ENCODE measurements at regions of chr18 and their contacts with region 1.

Region 1: DNA sequence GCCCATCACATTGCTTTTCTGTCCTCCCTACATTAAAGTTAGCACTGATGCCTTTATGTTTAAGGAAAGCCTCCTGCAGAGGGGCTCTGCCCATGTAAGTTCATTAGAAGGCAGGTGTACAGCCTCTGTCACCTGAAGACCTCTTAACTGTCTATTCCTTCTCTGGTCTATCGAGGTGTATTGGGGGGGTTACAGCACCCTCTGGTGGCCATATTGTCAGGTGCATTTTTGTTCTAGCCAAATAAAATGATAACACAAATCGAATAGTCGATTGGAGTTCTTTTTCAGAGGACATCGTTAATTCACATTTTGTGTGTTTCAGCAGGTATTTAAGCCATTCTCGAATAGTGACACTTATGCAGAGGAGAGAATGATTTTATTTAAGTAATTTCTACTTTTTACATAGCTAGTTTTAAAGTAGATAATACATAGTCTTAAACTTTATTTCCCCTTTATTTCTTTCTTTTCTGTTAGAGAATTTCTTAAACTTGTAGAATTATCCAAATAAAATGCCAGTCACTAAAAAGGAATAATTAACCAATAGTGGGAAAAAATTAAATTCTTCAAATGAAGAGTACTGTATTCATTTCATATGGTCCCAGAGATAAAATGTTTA is 136.8 kb downstream of the NEDD4L start:
- DNase-seq: peak; percentile 36 to 55 (median 46)
- H3K4me3 ChIP-seq: no peak overlapping the region
- H3K4me3 Mint-ChIP-seq: no peak overlapping the region
- H3K27ac ChIP-seq: no peak overlapping the region
- H3K27ac Mint-ChIP-seq: no peak overlapping the region
- H3K4me1 ChIP-seq: no peaks in the 10 kb centered on the region
- H3K4me1 Mint-ChIP-seq: peaks cover 0 to 4% (median 2%) of the 10 kb centered on the region in 4 donors
- H3K27me3 ChIP-seq: no peaks in the 10 kb centered on the region
- H3K27me3 Mint-ChIP-seq: peaks cover 3 to 5% of the 10 kb centered on the region in 2 donors

Region 2: DNA sequence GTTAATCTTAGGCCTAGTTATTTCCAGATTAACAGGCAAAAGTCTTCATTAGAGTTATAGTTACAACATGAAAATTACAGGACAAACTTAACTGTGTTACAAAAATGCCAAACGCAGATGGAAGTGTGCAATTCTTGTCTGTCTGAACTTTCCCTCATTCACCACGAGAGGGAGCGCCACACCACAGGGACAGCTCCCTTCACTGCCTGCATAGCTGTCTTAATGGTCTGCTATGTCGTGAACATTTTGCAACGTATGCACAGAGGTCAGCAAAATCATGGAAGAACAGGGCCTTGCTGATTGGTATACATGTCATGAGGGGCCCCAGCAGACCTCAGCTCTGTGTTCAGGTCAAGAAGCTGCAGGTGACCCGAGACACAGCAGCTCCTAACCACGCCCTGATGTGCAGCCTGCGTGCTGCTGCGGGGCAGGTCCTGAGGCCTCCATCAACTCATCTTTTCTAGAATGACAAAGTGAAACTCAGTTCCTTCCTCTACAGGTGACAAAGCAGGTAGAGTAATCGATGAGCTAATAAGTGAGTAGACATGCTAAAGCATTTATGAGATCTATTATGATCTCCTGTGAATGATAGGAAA is 298.9 kb before region 1 on chr18:
- CTCF ChIA-PET with region 1: interaction called, 4 read pairs
- POLR2A ChIA-PET with region 1: no interaction called
- intact Hi-C with region 1: loop called (anchors 2 kb)
- DNase-seq: peak in 4 of 5 donors; percentile 19 to 38 (median 30)
- H3K4me3 ChIP-seq: no peak overlapping the region
- H3K4me3 Mint-ChIP-seq: no peak overlapping the region
- H3K27ac ChIP-seq: no peak overlapping the region
- H3K27ac Mint-ChIP-seq: no peak overlapping the region
- H3K4me1 ChIP-seq: no peaks in the 10 kb centered on the region
- H3K4me1 Mint-ChIP-seq: peaks cover 0 to 3% (median 0%) of the 10 kb centered on the region in 4 donors
- H3K27me3 ChIP-seq: no peaks in the 10 kb centered on the region
- H3K27me3 Mint-ChIP-seq: peaks cover 2 to 11% of the 10 kb centered on the region in 2 donors

Region 3: GRCh38 chr18:58195278-58195765 is 14.5 kb after region 1 on chr18:
- CTCF ChIA-PET with region 1: interaction called, 17 read pairs
- POLR2A ChIA-PET with region 1: no interaction called
- intact Hi-C with region 1: no loop called
- DNase-seq: peak; percentile 11 to 37 (median 22)
- H3K4me3 ChIP-seq: peak overlapping the region in 1 of 2 donors; percentile 37
- H3K4me3 Mint-ChIP-seq: peak overlapping the region; percentile 76 to 91 (median 84)
- H3K27ac ChIP-seq: no peak overlapping the region
- H3K27ac Mint-ChIP-seq: peak overlapping the region in 3 of 7 donors; percentile 76 to 85 (median 77)
- H3K4me1 ChIP-seq: no peaks in the 10 kb centered on the region
- H3K4me1 Mint-ChIP-seq: peaks cover 6 to 27% (median 14%) of the 10 kb centered on the region in 4 donors
- H3K27me3 ChIP-seq: no peaks in the 10 kb centered on the region
- H3K27me3 Mint-ChIP-seq: peaks cover 3 to 7% of the 10 kb centered on the region in 2 donors

Region 4: DNA sequence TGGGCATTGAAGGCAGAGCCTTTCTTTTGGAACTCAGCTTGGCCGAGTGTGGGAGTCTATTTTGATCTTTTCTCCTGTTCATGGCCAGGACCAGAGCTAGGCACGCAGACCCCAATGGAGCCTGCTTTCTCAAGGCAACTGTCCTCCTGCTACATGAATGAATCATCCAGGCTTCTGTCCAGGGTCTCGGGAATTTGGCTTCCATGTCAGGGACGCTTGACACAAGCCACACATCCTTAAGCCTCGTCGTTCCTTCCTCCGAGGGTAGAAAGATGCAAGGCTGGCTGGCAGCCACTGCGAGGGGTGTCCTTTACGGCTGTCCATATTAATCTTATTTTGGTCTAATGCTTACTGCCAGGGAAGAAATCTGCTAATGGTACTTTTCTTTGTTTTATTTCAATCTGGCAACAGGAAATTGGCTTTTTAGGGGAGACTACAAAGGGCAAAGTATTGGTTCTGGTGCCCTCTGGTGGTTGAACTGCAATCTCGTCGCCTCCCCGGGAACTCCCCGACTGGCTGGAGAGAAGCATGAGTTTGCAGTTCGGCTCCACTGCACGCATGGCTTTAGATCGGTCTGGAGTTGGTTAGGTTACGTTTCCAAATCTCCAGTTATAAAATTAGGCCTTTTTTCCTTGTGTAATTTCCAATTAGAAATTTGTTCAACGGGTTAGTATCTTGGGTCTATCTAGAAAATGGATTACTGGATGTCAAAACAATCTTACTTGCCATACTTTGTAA is 312.8 kb after region 1 on chr18:
- CTCF ChIA-PET with region 1: no interaction called
- POLR2A ChIA-PET with region 1: no interaction called
- intact Hi-C with region 1: loop called (anchors 10 kb)
- DNase-seq: peak; percentile 60 to 73 (median 62)
- H3K4me3 ChIP-seq: no peak overlapping the region
- H3K4me3 Mint-ChIP-seq: peak overlapping the region in 3 of 8 donors; percentile 8 to 23 (median 21)
- H3K27ac ChIP-seq: no peak overlapping the region
- H3K27ac Mint-ChIP-seq: peak overlapping the region in 2 of 7 donors; percentile 23 to 32
- H3K4me1 ChIP-seq: peaks cover 7% of the 10 kb centered on the region
- H3K4me1 Mint-ChIP-seq: peaks cover 4 to 15% (median 5%) of the 10 kb centered on the region in 4 donors
- H3K27me3 ChIP-seq: no peaks in the 10 kb centered on the region
- H3K27me3 Mint-ChIP-seq: peaks cover 22% of the 10 kb centered on the region in 2 donors

Region 5: DNA sequence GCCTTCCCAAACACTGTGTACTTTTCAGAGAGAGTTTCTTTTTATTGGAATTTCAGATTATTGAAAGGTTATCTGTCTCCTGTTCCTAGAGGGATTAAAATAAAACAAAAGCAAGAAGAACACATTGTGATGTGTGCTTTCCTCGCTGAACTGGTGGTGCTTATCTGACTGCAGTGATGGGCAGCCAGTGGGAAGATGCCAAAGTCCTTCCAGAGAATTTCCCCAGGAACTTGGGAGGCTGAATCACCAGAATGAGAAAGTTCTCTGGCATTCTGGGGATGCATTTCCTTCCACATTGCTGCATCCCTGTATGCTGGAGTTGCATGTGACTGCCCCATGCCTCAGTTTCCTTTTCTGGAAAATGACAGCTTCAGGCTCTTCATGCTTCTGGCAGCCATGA is 905.0 kb after region 1 on chr18:
- CTCF ChIA-PET with region 1: no interaction called
- POLR2A ChIA-PET with region 1: no interaction called
- intact Hi-C with region 1: no loop called
- DNase-seq: no peak
- H3K4me3 ChIP-seq: no peak overlapping the region
- H3K4me3 Mint-ChIP-seq: no peak overlapping the region
- H3K27ac ChIP-seq: no peak overlapping the region
- H3K27ac Mint-ChIP-seq: no peak overlapping the region
- H3K4me1 ChIP-seq: peaks cover 18% of the 10 kb centered on the region
- H3K4me1 Mint-ChIP-seq: peaks cover 8 to 18% (median 12%) of the 10 kb centered on the region in 4 donors
- H3K27me3 ChIP-seq: peaks cover 10% of the 10 kb centered on the region
- H3K27me3 Mint-ChIP-seq: peaks cover 15 to 20% of the 10 kb centered on the region in 2 donors